Heart right ventricle (tissue), 16 donors: ENCODE measurements at regions of chr12 and their contacts with region 1.

Region 1: GRCh38 chr12:124518051-124518932 is 49.1 kb downstream of the NCOR2 start:
- DNase-seq: peak; percentile 98 to 99
- ATAC-seq: peak; percentile 67 to 86 (median 78)
- H3K4me3 ChIP-seq: peak overlapping the region in 9 of 10 donors; percentile 41 to 68 (median 61)
- H3K27ac ChIP-seq: peak overlapping the region; percentile 82 to 100 (median 97)
- H3K4me1 ChIP-seq: peaks cover 43 to 99% (median 86%) of the 10 kb centered on the region in 9 donors
- H3K27me3 ChIP-seq: no peaks in the 10 kb centered on the region
- CTCF ChIP-seq: no peak

Region 2: DNA sequence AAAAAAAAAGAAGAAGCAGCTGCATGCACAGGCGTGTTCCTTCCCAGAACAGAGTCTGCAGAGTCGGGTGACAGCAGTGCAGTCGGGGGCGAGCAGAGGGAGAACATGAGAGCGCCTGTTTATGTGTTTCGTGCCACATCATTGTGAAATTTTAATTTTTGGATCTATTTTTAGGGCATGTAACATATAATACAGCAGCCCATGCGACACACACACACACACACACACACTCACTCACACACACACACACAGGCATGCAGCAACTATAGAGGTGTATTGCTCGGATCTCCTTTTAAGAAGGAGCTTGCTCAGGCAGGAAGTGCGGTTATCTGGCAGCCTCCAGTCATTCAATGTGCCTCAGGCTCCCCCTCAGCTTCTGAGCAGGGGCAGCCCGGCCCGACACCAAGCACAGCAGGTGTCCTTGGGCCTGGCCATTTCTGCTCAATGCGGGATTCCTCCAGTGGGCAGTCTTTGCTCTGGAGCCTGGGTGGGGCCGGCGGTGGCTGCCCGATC is 473.4 kb before region 1 on chr12:
- intact Hi-C with region 1: no loop called
- DNase-seq: no peak
- ATAC-seq: no peak
- H3K4me3 ChIP-seq: no peak overlapping the region
- H3K27ac ChIP-seq: no peak overlapping the region
- H3K4me1 ChIP-seq: peaks cover 0 to 18% (median 4%) of the 10 kb centered on the region in 9 donors
- H3K27me3 ChIP-seq: no peaks in the 10 kb centered on the region
- CTCF ChIP-seq: no peak

Region 3: DNA sequence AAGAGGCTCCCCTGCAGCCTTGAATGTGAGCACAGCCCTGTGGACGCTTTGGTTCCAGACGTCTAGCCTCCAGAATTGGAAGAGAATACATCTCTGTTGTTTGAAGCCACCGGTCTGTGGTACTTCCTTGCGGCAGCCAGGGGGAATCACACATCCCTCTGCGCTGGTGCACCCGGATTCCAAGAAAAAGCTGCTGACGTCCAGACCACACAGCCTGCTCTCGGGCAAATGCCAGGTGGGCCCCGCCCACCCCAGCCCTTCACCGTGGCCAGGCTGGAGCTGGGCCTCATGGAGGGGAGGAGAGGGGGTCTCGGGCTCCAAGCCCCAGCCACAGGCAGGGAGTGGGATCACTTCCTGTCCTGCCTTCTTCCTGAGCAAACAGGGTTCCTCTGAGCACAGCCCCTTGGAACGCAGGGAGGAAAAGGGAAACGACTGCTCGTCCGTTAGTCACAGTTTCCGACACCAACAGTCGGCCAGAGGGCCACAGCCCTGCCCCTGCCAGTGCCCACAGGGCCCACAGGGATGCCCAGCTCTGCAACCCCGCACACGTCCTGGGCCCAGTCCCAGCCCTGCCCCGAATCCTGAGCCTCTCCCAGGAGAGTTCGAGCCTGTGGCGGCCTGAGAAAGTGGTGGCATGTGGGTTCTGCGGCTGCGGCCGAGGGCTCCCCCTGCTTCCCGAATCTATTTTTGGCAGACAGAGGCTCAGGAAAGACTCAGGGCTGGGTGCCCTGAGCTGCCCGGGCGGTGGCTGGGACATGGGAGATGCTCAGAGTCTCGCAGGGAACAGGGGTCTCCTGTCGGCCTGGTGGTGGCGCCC is 138.1 kb before region 1 on chr12:
- intact Hi-C with region 1: loop called in 2 of 10 experiments (anchors 5 to 10 kb)
- DNase-seq: peak; percentile 62 to 78
- ATAC-seq: peak; percentile 36 to 69 (median 59)
- H3K4me3 ChIP-seq: peak overlapping the region in 2 of 10 donors; percentile 9 to 23
- H3K27ac ChIP-seq: peak overlapping the region; percentile 82 to 99 (median 87)
- H3K4me1 ChIP-seq: peaks cover 38 to 70% (median 54%) of the 10 kb centered on the region in 9 donors
- H3K27me3 ChIP-seq: no peaks in the 10 kb centered on the region
- CTCF ChIP-seq: peak; percentile 29 to 73 (median 61)

Region 4: GRCh38 chr12:124453419-124454351 is 64.6 kb before region 1 on chr12:
- intact Hi-C with region 1: loop called in 4 of 10 experiments (anchors 2 to 10 kb)
- DNase-seq: peak; percentile 90 to 93
- ATAC-seq: peak; percentile 76 to 88 (median 84)
- H3K4me3 ChIP-seq: peak overlapping the region in 6 of 10 donors; percentile 16 to 31 (median 25)
- H3K27ac ChIP-seq: peak overlapping the region; percentile 61 to 95 (median 88)
- H3K4me1 ChIP-seq: peaks cover 34 to 77% (median 72%) of the 10 kb centered on the region in 9 donors
- H3K27me3 ChIP-seq: no peaks in the 10 kb centered on the region
- CTCF ChIP-seq: peak in 4 of 9 donors; percentile 10 to 39 (median 29)

Region 5: GRCh38 chr12:124551268-124552144 is 33.2 kb after region 1 on chr12:
- intact Hi-C with region 1: loop called in 3 of 10 experiments (anchors 5 kb)
- DNase-seq: peak; percentile 66 to 71
- ATAC-seq: peak in 6 of 8 donors; percentile 4 to 56 (median 41)
- H3K4me3 ChIP-seq: no peak overlapping the region
- H3K27ac ChIP-seq: peak overlapping the region in 8 of 10 donors; percentile 10 to 77 (median 31)
- H3K4me1 ChIP-seq: peaks cover 54 to 95% (median 81%) of the 10 kb centered on the region in 9 donors
- H3K27me3 ChIP-seq: no peaks in the 10 kb centered on the region
- CTCF ChIP-seq: no peak

Region 6: GRCh38 chr12:124625867-124626675 is 107.8 kb after region 1 on chr12:
- intact Hi-C with region 1: loop called in 1 of 10 experiments (anchors 5 kb)
- DNase-seq: peak; percentile 91
- ATAC-seq: peak; percentile 84 to 97 (median 92)
- H3K4me3 ChIP-seq: peak overlapping the region in 1 of 10 donors; percentile 24
- H3K27ac ChIP-seq: peak overlapping the region; percentile 65 to 95 (median 83)
- H3K4me1 ChIP-seq: peaks cover 13 to 64% (median 41%) of the 10 kb centered on the region in 9 donors
- H3K27me3 ChIP-seq: no peaks in the 10 kb centered on the region
- CTCF ChIP-seq: no peak

Region 7: DNA sequence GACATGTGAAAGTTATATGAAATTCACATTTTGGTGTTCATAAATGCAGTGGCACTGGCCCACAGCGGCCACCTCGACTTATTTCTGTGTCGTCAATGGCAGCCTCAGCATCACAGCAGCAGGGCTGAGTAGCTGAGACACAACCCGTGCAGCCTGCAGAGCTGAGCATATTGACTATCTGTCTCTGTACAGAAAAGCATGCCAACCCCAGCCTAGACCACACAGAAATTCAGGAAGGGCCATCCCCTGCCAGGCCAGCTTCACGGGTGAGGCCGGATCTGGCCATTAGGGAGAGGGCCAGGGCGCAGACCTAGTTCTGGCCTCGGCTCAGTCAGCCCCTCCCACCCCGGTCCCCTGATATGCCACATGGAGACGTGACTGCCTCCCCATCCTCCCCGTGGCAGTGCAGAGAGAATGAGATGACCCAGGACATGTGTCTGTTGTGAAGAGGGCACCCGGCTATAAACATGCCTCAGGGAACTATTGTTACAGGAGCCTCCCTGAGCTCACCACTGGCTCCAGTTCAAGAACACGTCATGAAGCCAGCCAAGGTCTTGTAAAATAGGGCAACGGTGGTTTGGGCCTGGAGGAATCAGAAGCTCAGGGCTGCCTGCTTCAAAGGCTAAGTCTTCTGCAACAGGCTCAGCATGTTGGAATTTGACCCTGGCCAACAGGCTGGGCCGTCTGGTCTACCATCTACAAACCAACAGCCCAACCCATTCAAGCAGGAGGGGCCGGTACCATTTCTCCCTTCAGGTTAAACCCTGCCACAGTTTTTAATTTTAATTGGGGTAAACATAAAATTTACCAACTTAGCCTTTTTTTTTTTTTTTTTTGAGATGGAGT is 319.9 kb after region 1 on chr12:
- intact Hi-C with region 1: no loop called
- DNase-seq: peak; percentile 61 to 87
- ATAC-seq: peak; percentile 63 to 92 (median 81)
- H3K4me3 ChIP-seq: no peak overlapping the region
- H3K27ac ChIP-seq: peak overlapping the region; percentile 39 to 78 (median 62)
- H3K4me1 ChIP-seq: peaks cover 9 to 53% (median 33%) of the 10 kb centered on the region in 9 donors
- H3K27me3 ChIP-seq: no peaks in the 10 kb centered on the region
- CTCF ChIP-seq: no peak